MCF 10A (cell line): ENCODE measurements at regions of chr13 and their contacts with region 1.

Region 1: DNA sequence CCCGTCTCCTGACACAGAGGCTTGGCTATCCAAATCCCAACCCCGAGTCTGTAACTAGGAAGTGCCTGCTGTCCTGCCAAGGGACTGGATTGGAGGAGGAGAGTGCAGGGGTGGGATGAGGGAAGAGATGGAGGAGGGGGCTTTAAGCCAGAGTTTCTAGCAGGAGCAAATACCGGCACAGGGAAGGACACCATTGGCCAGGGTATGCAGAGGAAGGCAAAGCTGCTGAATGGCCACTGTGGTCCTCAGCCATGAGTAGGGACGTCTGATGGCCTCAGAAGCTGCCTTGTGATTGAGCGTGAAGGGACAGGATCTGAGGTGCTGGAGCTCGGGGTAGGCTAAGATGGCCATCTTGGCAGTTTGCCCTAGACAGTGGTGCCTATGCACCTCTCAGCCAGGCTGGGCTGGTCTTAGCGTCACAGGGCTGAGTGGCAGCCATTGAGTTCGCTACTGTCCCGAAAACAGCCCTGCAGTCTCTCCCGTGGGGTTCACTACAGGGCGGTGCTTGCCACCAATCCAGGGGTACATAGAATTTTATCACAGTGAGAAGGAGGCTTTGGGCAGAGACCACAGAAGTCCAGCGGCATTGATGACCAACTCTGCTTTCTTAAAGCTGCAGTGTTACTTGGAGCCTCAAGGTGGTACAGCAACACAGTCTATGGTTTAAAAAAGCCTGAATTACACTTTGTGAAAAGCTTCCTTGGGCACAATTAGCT is 61.8 kb downstream of the AKAP11 start:
- DNase-seq: peak; percentile 45
- H3K4me3 Mint-ChIP-seq: no peak overlapping the region
- H3K27ac Mint-ChIP-seq: no peak overlapping the region
- H3K4me1 Mint-ChIP-seq: peaks cover 5% of the 10 kb centered on the region
- H3K27me3 Mint-ChIP-seq: no peaks in the 10 kb centered on the region
- CTCF ChIP-seq: peak; percentile 49

Region 2: DNA sequence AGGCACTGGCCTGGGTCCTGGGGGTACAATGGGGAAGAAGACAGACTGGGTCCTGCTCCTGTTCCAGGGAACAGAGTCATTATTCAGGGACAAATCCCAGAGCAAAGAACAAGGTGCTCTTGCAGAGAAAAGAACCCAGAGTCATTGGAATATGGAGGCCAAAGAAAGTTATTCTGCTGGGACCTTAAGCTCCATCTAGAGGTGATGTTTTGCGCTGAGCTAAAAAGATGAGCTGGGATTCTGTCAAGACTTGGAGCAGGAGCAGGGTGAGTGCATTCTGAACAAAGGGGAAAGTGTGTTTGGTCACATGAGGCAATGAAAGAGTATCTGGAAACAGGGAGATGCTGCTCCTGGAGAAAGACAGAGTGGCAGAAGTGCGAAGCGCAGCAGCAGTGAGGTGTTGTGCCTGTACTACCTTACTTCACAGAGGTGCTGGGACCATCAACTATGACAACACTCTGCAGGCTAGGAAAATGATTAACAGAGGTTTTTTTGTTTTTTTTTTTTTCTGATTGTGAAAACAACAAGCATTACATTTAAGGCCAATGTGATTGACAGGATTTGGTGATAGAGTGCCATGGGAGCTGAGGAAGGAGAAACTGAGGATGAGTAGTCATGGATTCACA is 144.9 kb after region 1 on chr13:
- CTCF ChIA-PET with region 1: interaction called, 4 read pairs
- POLR2A ChIA-PET with region 1: no interaction called
- intact Hi-C with region 1: loop called (anchors 1 kb)
- DNase-seq: peak; percentile 45
- H3K4me3 Mint-ChIP-seq: no peak overlapping the region
- H3K27ac Mint-ChIP-seq: no peak overlapping the region
- H3K4me1 Mint-ChIP-seq: no peaks in the 10 kb centered on the region
- H3K27me3 Mint-ChIP-seq: no peaks in the 10 kb centered on the region
- CTCF ChIP-seq: peak; percentile 28

Region 3: DNA sequence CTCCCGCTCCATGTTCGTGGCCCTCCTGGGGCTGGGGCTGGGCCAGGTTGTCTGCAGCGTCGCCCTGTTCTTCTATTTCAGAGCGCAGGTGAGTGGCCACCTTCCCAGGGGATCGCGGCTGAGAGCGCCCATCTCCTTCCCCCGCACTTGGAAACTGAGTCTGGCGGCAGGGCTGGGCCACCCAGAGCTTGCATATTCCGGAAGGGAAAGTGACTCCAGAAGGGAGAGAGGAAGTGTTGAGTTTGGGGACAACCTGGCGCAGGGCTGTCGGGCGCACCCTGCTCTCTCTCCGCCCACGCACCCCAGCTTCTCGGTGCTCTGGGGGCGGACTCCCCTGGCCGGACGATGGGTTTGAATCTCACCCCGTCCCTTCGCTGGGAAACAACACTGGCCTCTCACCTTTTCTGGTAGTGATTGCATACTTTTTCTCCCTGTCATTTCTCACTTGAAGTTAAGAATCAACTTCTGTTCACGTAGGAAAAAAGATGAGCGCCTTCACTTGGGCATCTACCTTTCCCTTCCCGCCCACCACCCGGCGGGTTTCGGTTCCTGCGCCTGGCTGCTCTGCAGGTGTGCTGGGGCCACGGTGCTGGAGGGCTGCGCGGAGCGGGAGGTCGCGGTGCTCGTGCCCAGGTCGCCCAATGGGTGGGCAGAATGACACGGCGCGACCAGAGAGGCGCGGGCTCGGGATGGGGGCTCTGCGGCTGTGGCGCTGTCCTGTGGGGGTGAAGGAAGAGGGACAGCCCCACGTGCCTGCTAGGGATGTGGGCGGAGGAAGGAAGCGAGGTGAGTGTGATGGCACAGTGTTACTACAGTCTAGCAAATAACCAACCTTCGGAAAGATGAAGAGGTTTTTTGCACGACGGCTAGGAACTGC is 240.9 kb after region 1 on chr13:
- CTCF ChIA-PET with region 1: no interaction called
- POLR2A ChIA-PET with region 1: no interaction called
- intact Hi-C with region 1: no loop called
- DNase-seq: no peak
- H3K4me3 Mint-ChIP-seq: no peak overlapping the region
- H3K27ac Mint-ChIP-seq: no peak overlapping the region
- H3K4me1 Mint-ChIP-seq: no peaks in the 10 kb centered on the region
- H3K27me3 Mint-ChIP-seq: no peaks in the 10 kb centered on the region
- CTCF ChIP-seq: no peak

Region 4: DNA sequence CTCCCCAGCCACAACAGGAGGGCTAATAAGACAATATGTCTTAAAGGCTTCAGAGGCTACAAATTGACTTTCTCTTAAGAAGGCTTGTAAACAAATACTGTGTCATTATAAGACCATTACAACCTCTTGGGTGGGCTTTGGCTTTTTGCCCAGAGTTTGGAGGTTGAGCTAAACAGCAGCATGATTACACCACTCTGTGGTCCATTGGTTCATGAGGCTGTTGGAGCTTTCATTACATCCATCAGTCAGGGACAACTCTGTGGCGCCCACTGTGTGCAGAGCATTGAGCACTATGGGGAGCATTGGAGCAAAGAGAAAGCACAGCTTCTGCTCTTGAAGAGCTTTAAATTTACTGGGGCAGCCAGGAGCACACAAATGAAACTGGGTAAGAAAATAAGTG is 316.1 kb after region 1 on chr13:
- CTCF ChIA-PET with region 1: no interaction called
- POLR2A ChIA-PET with region 1: no interaction called
- intact Hi-C with region 1: loop called (anchors 10 kb)
- DNase-seq: no peak
- H3K4me3 Mint-ChIP-seq: no peak overlapping the region
- H3K27ac Mint-ChIP-seq: no peak overlapping the region
- H3K4me1 Mint-ChIP-seq: no peaks in the 10 kb centered on the region
- H3K27me3 Mint-ChIP-seq: peaks cover 48% of the 10 kb centered on the region
- CTCF ChIP-seq: no peak